ENCODE measurements at regions of chr2 and their contacts with region 1.

Region 1: GRCh38 chr2:178112202-178113152 is at the start of gene RBM45:
- DNase-seq: peak; percentile 86
- H3K4me3 Mint-ChIP-seq: peak within 1 kb of the TSS; percentile 92
- H3K27ac Mint-ChIP-seq: peak within 1 kb of the TSS; percentile 59
- H3K4me1 Mint-ChIP-seq: peaks cover 36% of the 10 kb centered on the region
- H3K27me3 Mint-ChIP-seq: no peaks in the 10 kb centered on the region
- total RNA-seq, gene RBM45: 5.7 to 5.8 TPM

Region 2: GRCh38 chr2:178193823-178194599 is 81.5 kb after region 1 on chr2 and contains the start of gene OSBPL6:
- CTCF ChIA-PET with region 1: interaction called, 7 read pairs
- intact Hi-C with region 1: loop called (anchors 1 kb)
- DNase-seq: peak; percentile 65
- H3K4me3 Mint-ChIP-seq: peak within 1 kb of the TSS; percentile 69
- H3K27ac Mint-ChIP-seq: no peak within 1 kb of the TSS
- H3K4me1 Mint-ChIP-seq: peaks cover 3% of the 10 kb centered on the region
- H3K27me3 Mint-ChIP-seq: peaks cover 51% of the 10 kb centered on the region
- total RNA-seq, gene OSBPL6: 1.9 to 2.3 TPM

Region 3: DNA sequence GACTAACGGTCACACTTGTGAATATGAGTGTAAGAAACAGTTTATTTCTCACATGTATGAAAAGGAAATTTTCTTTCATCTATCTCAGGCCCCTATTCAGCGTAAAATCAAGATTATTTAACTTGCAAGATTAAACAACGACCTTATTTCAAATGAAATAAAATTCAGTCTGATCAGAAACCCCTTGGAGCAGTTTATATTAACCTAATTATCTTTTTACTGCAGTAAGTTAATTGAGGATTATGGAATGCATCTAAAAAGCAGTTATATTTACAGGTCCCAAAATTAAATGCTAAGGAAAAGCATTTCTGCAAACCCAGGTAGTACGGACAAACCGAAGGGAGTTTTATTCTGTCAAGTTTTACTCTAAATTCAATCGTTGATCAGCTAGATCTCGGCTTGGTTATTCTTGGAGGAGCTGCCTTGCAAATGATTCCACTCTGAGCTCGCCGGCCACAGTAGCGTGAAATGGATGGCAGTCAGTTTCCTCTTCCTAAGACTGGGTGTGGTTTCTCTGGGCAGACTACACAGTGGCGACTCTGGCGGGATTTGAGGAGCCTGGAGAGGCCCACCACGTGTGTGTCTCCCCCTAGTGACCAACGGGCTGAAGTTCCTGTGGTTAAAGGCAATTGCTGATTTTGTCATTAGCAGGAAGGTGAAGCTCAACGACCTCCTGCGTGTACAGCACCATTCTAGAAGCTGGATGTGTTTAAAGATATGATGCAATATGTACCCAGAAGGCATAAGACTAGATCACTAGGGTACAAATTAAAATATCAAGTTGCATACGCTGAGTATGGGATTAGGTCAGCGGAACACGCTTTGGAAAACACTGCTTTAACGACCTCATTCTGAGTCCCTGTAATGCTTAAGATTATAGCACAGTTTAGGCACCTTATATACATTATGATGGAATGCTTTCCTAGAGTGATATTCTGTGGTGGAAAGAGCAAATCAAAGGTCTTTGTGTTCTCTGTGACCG is 302.1 kb after region 1 on chr2:
- CTCF ChIA-PET with region 1: interaction called, 40 read pairs
- intact Hi-C with region 1: loop called (anchors 1 kb)
- DNase-seq: peak; percentile 93
- H3K4me3 Mint-ChIP-seq: peak overlapping the region; percentile 79
- H3K27ac Mint-ChIP-seq: peak overlapping the region; percentile 90
- H3K4me1 Mint-ChIP-seq: peaks cover 12% of the 10 kb centered on the region
- H3K27me3 Mint-ChIP-seq: no peaks in the 10 kb centered on the region

Region 4: GRCh38 chr2:178522950-178523595 is 410.6 kb after region 1 on chr2:
- CTCF ChIA-PET with region 1: no interaction called
- intact Hi-C with region 1: loop called (anchors 2 kb)
- DNase-seq: peak; percentile 92
- H3K4me3 Mint-ChIP-seq: peak overlapping the region; percentile 82
- H3K27ac Mint-ChIP-seq: peak overlapping the region; percentile 87
- H3K4me1 Mint-ChIP-seq: peaks cover 48% of the 10 kb centered on the region
- H3K27me3 Mint-ChIP-seq: no peaks in the 10 kb centered on the region

Region 5: DNA sequence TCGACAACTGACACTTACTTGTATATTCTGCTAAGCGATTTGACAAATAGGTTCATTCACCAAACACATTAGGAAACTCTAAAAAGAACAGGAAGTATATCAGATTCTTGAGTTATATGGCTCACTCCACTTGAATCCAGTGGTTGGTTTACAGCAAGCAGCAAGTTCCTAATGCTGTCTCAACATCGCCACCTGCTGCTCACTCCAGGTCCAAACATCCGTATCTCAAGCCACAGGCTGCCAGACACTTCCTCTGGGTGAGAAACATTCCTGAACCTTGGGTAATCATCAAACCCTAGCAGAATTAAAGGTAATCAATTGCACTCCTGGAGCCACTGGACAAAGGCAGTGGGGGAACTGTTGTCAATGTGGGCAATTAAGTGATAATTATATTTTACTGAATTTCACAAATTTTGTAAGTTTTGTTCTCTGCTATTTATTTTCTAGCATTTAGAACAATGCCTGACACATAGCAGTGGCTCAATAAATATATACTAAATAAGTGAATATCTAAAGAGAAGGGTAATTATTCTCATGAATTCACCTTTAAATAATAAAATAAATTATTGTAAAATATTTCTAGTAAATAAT is 801.9 kb after region 1 on chr2:
- CTCF ChIA-PET with region 1: no interaction called
- intact Hi-C with region 1: loop called (anchors 10 kb)
- DNase-seq: peak; percentile 89
- H3K4me3 Mint-ChIP-seq: no peak overlapping the region
- H3K27ac Mint-ChIP-seq: no peak overlapping the region
- H3K4me1 Mint-ChIP-seq: peaks cover 7% of the 10 kb centered on the region
- H3K27me3 Mint-ChIP-seq: no peaks in the 10 kb centered on the region

Measured in activated naive CD4-positive, alpha-beta T cell treated with anti-CD3 and anti-CD28 coated beads for 36 hours (primary cell).